ENCODE measurements at regions of chr1 and their contacts with region 1.

Region 1: DNA sequence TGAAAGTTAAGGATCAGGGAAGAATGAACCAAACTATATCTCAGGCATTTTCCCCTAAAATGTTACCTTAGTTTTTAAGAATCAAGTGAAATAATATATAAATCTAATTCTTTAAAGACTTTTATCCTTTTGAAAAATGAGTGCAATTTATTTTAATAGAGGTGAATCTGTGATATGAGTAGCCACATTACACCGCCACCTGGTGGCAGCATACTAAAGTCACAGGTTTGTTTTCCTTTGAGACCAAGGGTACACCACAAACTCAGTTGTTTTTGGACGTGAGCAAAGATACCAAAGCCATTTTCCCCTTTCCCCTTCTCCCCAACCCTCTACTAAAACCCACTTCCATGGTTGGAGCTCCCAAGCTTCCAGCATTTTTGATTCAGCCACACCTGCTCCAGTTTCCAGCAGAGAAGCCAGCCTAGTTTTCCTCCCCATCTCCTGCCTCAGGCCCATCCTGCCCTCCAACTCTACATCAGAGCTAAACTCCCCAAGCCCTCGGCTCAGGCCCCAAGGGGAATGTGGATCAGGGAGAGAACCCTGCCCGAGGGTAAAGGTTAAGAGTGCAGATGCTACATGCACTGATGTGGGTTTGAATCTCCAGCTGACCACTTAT is 22.9 kb upstream of the LDLRAP1 start:
- H3K4me3 ChIP-seq: no peak overlapping the region
- H3K27ac ChIP-seq: no peak overlapping the region
- H3K4me1 ChIP-seq: no peaks in the 10 kb centered on the region
- CTCF ChIP-seq: no peak

Region 2: DNA sequence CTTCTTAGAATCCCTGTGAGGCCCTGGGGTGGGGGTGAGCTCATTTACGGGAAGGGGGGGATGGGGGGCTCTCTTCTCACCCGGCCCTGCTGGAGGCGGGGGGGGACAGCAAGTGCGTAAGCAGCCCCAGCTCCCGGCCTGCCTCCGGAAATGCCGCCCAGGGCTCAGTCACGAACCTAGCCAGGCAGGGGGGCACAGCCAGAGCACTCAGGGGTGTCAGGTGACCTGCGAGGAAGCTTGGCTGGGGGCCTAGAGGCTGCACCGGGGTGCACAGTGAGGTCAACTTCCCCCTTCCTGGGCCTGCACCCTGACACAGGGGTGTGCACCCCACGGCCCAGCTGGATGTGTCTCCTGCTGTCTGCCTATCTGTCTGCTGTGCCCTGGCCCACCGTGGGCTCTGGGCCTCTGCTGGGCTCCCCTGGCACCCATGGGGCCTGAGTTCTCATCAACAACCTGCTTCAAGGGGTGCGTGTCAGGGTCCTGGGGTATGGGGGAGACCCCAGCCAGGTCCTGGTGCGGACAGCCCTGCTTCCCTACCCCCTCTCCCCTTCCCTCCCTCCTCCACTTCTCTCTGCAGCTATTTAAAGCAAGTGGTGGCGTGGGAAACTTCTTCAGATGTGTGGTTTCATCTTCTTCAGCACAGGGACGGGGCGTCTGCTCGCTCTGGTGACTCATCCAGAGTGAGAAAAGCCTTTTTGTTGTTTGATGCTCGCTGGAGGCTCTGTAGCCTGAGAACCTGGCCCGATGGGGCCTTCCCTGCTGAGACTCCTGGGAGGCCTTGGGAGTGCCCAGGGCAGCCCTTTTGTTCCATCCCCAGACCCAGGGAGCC is 498.0 kb before region 1 on chr1:
- CTCF ChIA-PET with region 1: no interaction called
- POLR2A ChIA-PET with region 1: no interaction called
- H3K4me3 ChIP-seq: no peak overlapping the region
- H3K27ac ChIP-seq: peak overlapping the region; percentile 51; the same call in 1 of the 2 replicates
- H3K4me1 ChIP-seq: no peaks in the 10 kb centered on the region; the same call in 1 of the 2 replicates
- CTCF ChIP-seq: no peak

Region 3: DNA sequence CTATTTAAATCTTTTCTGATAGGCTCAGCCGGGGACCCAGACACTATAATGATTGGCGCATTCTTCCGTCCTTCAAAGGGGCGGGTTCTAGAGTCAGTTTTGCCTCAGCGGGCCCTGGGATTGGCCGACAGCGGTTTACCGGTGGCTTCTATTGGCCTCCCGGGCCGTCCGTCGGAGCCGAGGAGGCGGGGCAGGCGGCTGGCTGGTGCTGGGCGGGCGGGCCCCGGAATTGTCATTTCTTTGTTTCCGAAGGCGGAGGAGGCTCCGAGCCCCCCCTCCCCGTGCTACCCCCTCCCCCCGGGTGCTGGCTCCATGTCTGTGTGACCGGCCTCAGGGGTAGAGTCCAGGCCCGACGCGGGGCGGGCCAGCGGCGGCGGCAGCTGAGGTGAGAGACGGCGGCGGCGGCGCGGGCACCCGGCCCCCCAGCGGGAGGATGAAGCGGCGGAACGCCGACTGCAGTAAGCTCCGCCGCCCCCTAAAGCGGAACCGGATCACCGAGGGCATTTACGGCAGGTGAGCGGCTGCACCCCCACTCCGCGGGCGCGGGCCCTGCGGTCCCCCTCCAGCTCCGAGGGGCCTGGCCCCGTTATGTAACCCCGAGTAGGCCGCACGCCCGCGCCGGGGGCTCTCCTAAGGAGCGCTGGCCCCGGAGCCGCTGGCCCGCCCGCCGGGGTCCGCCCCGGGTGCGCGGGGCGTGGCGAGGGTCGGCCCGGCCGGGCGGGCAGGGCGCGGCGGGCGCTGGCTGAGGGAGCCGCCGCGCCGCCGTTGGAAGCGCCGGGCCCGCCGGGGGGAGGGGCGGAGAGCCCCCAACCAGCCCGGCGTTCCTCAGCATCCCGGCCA is 89.7 kb before region 1 on chr1 and contains the start of gene MACO1:
- CTCF ChIA-PET with region 1: interaction called, 15 read pairs
- POLR2A ChIA-PET with region 1: interaction called, 5 read pairs
- H3K4me3 ChIP-seq: peak within 1 kb of the TSS; percentile 84
- H3K27ac ChIP-seq: peak within 1 kb of the TSS; percentile 76; the same call in 1 of the 2 replicates
- H3K4me1 ChIP-seq: peaks cover 27% of the 10 kb centered on the region
- CTCF ChIP-seq: no peak

Region 4: DNA sequence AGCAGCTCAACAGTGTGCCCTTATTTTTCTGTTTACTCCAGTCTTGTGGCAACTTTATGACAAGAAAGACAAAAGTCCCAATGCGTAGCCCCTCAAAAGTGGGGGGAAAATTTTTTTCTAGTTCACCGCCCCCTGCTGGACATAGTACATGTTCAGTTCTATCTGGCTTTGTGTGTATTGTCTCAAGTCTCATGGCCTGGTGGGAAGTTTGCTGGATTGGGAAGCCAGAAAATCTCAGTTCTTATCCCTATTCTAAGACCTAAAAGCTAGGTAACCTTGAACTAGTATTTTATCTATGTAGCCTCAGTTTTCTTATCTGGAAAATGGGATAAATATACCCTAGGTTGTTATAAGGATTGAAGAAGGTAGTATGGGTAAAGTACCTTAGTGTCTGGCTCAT is 32.9 kb before region 1 on chr1:
- CTCF ChIA-PET with region 1: interaction called, 23 read pairs
- POLR2A ChIA-PET with region 1: no interaction called
- H3K4me3 ChIP-seq: no peak overlapping the region
- H3K27ac ChIP-seq: no peak overlapping the region
- H3K4me1 ChIP-seq: peaks cover 4% of the 10 kb centered on the region; the same call in 1 of the 2 replicates
- CTCF ChIP-seq: no peak

Region 5: DNA sequence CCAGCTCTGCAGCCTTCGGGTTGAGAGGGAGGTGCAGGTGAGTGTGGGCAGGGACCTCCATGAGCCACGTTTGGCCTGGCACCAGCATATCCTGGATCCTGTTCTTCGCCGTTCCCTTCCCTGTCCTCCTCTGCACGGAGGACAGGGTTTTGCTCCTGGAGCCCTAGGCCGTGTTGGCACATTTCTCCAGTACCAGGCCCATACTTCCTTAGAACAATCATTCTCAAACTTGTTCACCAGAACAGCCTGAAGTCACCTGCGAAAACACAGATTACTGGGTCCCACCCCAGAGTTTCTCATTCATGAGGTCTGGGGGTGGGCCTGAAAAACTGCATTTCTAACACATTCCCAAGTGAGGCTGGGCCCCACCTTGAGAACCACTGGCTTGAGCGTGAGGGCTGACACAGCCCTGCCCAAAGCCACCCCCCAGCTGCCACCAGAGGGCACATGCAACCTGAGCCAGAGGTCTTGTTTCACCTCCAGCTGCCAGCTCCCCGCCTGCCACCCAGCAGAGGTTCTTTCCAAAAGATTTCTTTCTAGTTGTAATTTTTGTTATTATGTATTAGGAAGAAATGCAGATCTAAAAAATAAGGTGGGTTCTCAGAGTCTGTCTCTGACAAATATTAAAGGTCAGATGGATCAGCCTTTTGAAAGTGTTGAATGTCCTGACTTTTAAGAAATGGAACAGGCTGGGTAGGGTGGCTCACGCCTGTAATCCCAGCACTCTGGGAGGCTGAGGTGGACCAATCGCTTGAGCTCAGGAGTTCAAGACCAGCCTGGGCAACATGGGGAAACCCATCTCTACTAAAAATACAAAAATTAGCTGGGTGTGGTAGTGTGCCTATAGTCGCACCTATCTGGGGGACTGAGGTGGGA is 16.8 kb before region 1 on chr1:
- CTCF ChIA-PET with region 1: interaction called, 11 read pairs
- POLR2A ChIA-PET with region 1: no interaction called
- H3K4me3 ChIP-seq: no peak overlapping the region
- H3K27ac ChIP-seq: no peak overlapping the region
- H3K4me1 ChIP-seq: no peaks in the 10 kb centered on the region
- CTCF ChIP-seq: peak; percentile 67

Region 6: GRCh38 chr1:25648681-25649440 is 128.3 kb after region 1 on chr1:
- CTCF ChIA-PET with region 1: no interaction called
- POLR2A ChIA-PET with region 1: no interaction called
- H3K4me3 ChIP-seq: no peak overlapping the region
- H3K27ac ChIP-seq: no peak overlapping the region
- H3K4me1 ChIP-seq: no peaks in the 10 kb centered on the region
- CTCF ChIP-seq: no peak

Measured in HEK293 (cell line).